Activated CD4-positive, alpha-beta T cell treated with anti-CD3 and anti-CD28 coated beads for 36 hours (primary cell): ENCODE measurements at regions of chr15 and their contacts with region 1.

Region 1: GRCh38 chr15:89243691-89244471 is at the start of gene FANCI:
- DNase-seq: peak; percentile 98
- ATAC-seq: peak; percentile 96
- H3K4me3 Mint-ChIP-seq: peak within 1 kb of the TSS; percentile 93
- H3K27ac Mint-ChIP-seq: peak within 1 kb of the TSS; percentile 93
- H3K4me1 Mint-ChIP-seq: peaks cover 29% of the 10 kb centered on the region
- H3K27me3 Mint-ChIP-seq: no peaks in the 10 kb centered on the region
- total RNA-seq, gene FANCI: 150 to 199 TPM

Region 2: DNA sequence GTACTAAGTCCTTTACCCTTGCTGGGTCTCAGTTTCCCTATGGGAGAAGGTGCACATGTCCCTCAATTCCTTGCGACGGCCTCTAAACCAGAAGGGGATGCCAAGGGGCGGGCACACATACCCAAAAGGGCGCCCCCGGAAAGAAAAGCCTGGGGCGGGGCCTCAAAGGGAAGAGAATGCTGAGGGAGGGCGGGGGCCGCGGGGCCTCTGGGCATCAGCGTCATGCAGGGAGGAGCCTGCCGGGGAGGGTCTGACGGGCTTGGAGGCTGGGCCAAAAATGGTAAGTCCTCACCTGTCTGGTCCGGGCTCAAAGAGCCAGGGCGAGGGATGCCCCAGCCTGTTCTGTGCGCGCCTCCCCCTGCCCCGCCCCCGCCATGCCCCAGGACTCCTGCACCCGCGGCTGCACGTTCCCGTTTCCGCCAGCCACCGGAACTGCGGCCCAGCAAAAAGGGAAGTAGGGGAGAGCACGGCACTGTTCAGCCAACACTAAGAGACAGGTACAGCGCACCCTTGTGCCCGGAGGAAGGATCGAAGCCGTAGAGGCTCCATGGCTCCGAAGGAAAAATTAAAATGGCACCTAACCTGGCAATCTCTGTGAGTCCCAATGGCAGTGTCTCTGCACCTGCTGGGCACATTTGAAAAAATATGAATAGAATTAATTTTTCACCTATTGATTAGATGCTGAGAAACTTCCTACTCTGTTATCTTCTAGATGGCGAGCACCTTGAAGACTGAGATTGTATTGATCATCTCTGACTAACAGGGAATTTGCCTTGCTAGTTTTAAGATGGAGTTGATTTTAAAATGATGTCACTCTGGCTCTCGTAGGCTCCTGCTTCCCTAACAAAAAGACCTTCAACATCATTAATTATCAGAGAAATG is 697.4 kb before region 1 on chr15 and contains the start of gene DET1:
- CTCF ChIA-PET with region 1: no interaction called
- POLR2A ChIA-PET with region 1: no interaction called
- intact Hi-C with region 1: loop called in 1 of 2 experiments (anchors 1 kb)
- DNase-seq: peak; percentile 98
- ATAC-seq: peak; percentile 97
- H3K4me3 Mint-ChIP-seq: peak within 1 kb of the TSS; percentile 83
- H3K27ac Mint-ChIP-seq: peak within 1 kb of the TSS; percentile 91
- H3K4me1 Mint-ChIP-seq: peaks cover 13% of the 10 kb centered on the region
- H3K27me3 Mint-ChIP-seq: no peaks in the 10 kb centered on the region
- total RNA-seq, gene DET1: 2.7 to 3.0 TPM

Region 3: GRCh38 chr15:88590759-88591158 is 653.1 kb before region 1 on chr15:
- CTCF ChIA-PET with region 1: no interaction called
- POLR2A ChIA-PET with region 1: no interaction called
- intact Hi-C with region 1: no loop called
- DNase-seq: no peak
- ATAC-seq: no peak
- H3K4me3 Mint-ChIP-seq: no peak overlapping the region
- H3K27ac Mint-ChIP-seq: no peak overlapping the region
- H3K4me1 Mint-ChIP-seq: peaks cover 4% of the 10 kb centered on the region
- H3K27me3 Mint-ChIP-seq: peaks cover 2% of the 10 kb centered on the region

Region 4: DNA sequence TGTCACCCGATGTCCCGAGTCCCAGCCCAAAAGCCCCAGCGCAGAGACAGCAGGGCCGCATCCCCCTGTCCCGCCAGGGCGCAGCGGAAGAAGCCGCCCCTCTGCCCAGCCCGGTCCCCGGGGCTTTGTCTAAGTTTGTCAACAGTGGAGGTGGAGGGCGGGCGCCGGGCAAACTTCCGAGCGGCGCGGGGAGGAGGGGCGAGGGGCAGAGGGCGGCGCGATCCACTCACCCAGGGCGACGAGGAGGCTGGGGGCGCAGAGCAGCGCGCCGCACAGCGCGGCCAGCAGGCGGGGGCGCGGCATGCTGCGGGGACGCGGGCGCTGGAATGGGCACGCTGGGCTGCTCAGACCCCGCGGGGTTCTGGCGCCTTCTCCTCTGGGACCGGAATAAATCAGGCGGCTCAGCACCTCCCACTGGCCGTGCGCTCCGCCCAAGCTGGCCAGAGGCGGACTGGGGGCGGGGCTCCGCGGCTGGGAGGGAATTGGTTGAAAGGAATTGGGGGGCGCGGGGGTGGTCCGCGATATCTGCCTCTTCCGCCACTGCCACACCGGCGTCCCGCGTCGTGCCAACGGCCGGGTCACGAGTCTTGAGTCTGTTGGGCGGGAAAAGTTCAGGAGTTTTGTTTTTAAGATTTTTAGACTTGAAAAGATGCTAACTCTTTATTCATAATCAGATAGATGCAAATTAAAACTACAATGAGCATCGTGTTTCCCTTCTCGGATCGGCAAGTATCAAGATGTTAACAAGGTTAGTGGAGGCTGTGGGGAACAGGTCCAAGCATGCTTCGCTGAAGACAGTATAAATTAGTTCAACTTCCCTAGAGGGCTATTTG is 330.6 kb before region 1 on chr15 and contains the start of gene MFGE8:
- CTCF ChIA-PET with region 1: no interaction called
- POLR2A ChIA-PET with region 1: no interaction called
- intact Hi-C with region 1: loop called in 1 of 2 experiments (anchors 5 kb)
- DNase-seq: peak; percentile 83
- ATAC-seq: peak; percentile 95
- H3K4me3 Mint-ChIP-seq: peak within 1 kb of the TSS; percentile 79
- H3K27ac Mint-ChIP-seq: peak within 1 kb of the TSS; percentile 82
- H3K4me1 Mint-ChIP-seq: peaks cover 16% of the 10 kb centered on the region
- H3K27me3 Mint-ChIP-seq: no peaks in the 10 kb centered on the region
- total RNA-seq, gene MFGE8: 17.0 to 18.6 TPM

Region 5: GRCh38 chr15:89299896-89300295 is 56.0 kb after region 1 on chr15:
- CTCF ChIA-PET with region 1: no interaction called
- POLR2A ChIA-PET with region 1: no interaction called
- intact Hi-C with region 1: no loop called
- DNase-seq: no peak
- ATAC-seq: no peak
- H3K4me3 Mint-ChIP-seq: no peak overlapping the region
- H3K27ac Mint-ChIP-seq: no peak overlapping the region
- H3K4me1 Mint-ChIP-seq: peaks cover 15% of the 10 kb centered on the region
- H3K27me3 Mint-ChIP-seq: no peaks in the 10 kb centered on the region

Region 6: GRCh38 chr15:89334510-89335288 is 90.8 kb after region 1 on chr15 and contains the start of gene POLG:
- CTCF ChIA-PET with region 1: no interaction called
- POLR2A ChIA-PET with region 1: no interaction called
- intact Hi-C with region 1: loop called (anchors 1 to 2 kb)
- DNase-seq: peak; percentile 99
- ATAC-seq: peak; percentile 92
- H3K4me3 Mint-ChIP-seq: peak within 1 kb of the TSS; percentile 80
- H3K27ac Mint-ChIP-seq: peak within 1 kb of the TSS; percentile 87
- H3K4me1 Mint-ChIP-seq: peaks cover 56% of the 10 kb centered on the region
- H3K27me3 Mint-ChIP-seq: peaks cover 2% of the 10 kb centered on the region
- total RNA-seq, gene POLG: 63.2 to 80.4 TPM

Region 7: DNA sequence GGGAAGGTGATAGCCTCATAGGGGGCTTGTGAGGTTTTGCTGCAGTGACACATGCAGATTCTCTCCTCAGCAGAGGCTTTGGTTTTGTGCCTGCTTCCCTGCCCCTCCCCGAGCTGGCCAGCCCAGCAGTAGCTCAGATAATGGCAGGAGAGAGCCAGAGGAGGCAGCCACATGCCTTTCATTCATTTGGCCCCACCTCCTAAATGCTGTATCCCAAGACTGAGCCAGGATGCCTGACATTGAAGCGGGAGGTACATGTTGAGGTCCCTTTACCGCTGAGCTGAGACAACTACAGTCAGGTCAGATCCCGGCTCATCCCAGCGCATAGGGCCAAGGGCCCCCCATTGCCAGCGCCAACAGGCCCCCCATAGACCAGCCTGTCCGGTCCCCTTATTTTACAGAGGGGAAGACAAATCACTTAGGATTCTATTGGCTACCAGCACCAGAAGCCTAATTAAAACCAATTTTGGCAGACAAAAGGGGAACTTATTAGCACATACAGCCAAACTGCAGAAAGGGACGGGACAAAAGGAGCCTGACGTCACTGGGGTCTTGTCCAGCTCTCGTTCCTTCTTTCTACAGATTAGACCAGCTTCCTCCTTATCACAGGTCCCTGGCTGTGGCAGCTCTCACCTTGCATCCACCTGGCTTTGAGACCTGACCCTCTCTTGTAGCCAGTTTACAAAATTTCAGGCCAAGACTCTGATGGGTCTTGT is 102.8 kb after region 1 on chr15:
- CTCF ChIA-PET with region 1: no interaction called
- POLR2A ChIA-PET with region 1: no interaction called
- intact Hi-C with region 1: no loop called
- DNase-seq: no peak
- ATAC-seq: no peak
- H3K4me3 Mint-ChIP-seq: no peak overlapping the region
- H3K27ac Mint-ChIP-seq: no peak overlapping the region
- H3K4me1 Mint-ChIP-seq: peaks cover 10% of the 10 kb centered on the region
- H3K27me3 Mint-ChIP-seq: peaks cover 2% of the 10 kb centered on the region